Endothelial cell of umbilical vein (primary cell): ENCODE measurements at regions of chr13 and their contacts with region 1.

Region 1: GRCh38 chr13:36346222-36347083 is at the start of gene SPART:
- DNase-seq: peak; percentile 93
- H3K4me3 ChIP-seq: peak within 1 kb of the TSS; percentile 59 to 89 (median 85)
- H3K27ac ChIP-seq: peak within 1 kb of the TSS; percentile 85
- H3K4me1 ChIP-seq: peaks cover 14% of the 10 kb centered on the region
- H3K27me3 ChIP-seq: no peaks in the 10 kb centered on the region
- CTCF ChIP-seq: peak; percentile 97 to 99
- POLR2A ChIP-seq: no peak
- total RNA-seq, gene SPART: 73.6 and 74.1 TPM in 2 replicates

Region 2: GRCh38 chr13:35978603-35979316 is 367.7 kb before region 1 on chr13:
- CTCF ChIA-PET with region 1: interaction called, 4 read pairs
- POLR2A ChIA-PET with region 1: no interaction called
- dilution Hi-C with region 1: no loop called
- intact Hi-C with region 1: loop called (anchors 2 kb)
- DNase-seq: peak; percentile 78
- H3K4me3 ChIP-seq: no peak overlapping the region
- H3K27ac ChIP-seq: no peak overlapping the region
- H3K4me1 ChIP-seq: peaks cover 7% of the 10 kb centered on the region
- H3K27me3 ChIP-seq: no peaks in the 10 kb centered on the region
- CTCF ChIP-seq: peak; percentile 35 to 50
- POLR2A ChIP-seq: no peak

Region 3: GRCh38 chr13:36297366-36298338 is 48.8 kb before region 1 on chr13 and contains the start of gene CCDC169:
- CTCF ChIA-PET with region 1: interaction called, 9 read pairs
- POLR2A ChIA-PET with region 1: no interaction called
- dilution Hi-C with region 1: no loop called
- intact Hi-C with region 1: loop called (anchors 2 kb)
- DNase-seq: peak; percentile 85
- H3K4me3 ChIP-seq: peak within 1 kb of the TSS; percentile 31 to 69 (median 59)
- H3K27ac ChIP-seq: peak within 1 kb of the TSS; percentile 17
- H3K4me1 ChIP-seq: peaks cover 18% of the 10 kb centered on the region
- H3K27me3 ChIP-seq: no peaks in the 10 kb centered on the region
- CTCF ChIP-seq: no peak
- POLR2A ChIP-seq: peak; percentile 84
- total RNA-seq, gene CCDC169: 2.5 and 5.3 TPM in 2 replicates

Region 4: DNA sequence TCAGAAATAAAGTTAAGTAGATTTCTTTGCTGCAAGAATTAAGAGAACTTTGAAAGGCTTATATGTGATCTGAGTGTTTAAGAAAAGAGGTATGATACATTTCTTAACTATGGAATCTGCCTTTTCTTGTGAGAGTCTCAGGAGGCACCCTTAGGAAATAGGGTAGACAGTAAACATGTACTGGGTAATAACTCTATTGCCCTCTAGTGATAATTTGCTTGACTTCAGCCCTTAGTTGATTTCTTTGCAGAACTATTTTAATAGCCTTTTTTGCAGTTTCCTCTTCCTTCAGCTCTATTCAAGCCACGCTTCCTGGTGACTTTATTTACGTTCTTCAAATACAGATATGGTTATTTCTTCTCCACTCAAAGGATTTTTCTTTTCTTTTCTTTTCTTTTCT is 48.8 kb after region 1 on chr13:
- CTCF ChIA-PET with region 1: interaction called, 24 read pairs
- POLR2A ChIA-PET with region 1: no interaction called
- dilution Hi-C with region 1: no loop called
- intact Hi-C with region 1: loop called (anchors 1 kb)
- DNase-seq: peak; percentile 54
- H3K4me3 ChIP-seq: no peak overlapping the region
- H3K27ac ChIP-seq: no peak overlapping the region
- H3K4me1 ChIP-seq: no peaks in the 10 kb centered on the region
- H3K27me3 ChIP-seq: peaks cover 0 to 4% of the 10 kb centered on the region in 2 experiments
- CTCF ChIP-seq: peak in 1 of 2 donors; percentile 34
- POLR2A ChIP-seq: no peak

Region 5: GRCh38 chr13:36736119-36736726 is 389.8 kb after region 1 on chr13:
- CTCF ChIA-PET with region 1: interaction called, 55 read pairs
- POLR2A ChIA-PET with region 1: no interaction called
- dilution Hi-C with region 1: no loop called
- intact Hi-C with region 1: loop called (anchors 1 kb)
- DNase-seq: peak; percentile 65
- H3K4me3 ChIP-seq: no peak overlapping the region
- H3K27ac ChIP-seq: no peak overlapping the region
- H3K4me1 ChIP-seq: no peaks in the 10 kb centered on the region
- H3K27me3 ChIP-seq: peaks cover 5 to 8% of the 10 kb centered on the region in 2 experiments
- CTCF ChIP-seq: peak; percentile 45 to 48
- POLR2A ChIP-seq: no peak

Region 6: DNA sequence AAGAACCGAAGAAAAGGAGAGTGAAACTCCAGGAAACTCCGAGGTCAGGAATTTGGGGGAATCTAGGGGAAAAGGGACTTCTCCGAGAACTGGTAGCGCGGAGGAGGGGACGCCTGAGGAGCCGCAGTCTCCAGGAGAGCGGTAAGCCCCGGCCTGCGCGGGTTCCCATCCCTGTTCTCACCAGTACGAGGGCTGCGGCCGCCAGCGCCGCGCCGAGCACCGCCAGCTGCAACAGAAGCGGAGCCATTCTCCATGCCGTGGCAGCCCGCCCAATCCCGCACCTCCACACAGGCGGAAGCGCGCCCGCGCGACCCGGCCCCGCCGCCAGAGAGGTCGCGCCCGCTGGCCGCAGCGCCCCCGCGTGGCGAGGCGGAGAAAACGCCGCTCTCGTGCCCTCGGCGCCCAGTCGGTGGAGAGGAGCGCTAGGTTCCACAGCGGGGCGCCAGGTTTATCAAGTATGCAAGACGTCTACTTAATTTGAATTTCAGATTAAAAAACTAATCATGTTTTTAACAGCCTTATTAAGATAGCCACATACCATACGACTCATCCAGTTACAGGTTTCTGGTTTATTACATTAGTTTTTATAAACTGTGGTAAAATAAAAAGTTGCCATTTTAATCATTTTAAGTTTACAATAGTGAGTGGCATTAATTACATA is 652.7 kb after region 1 on chr13 and contains the start of gene ALG5:
- CTCF ChIA-PET with region 1: no interaction called
- POLR2A ChIA-PET with region 1: no interaction called
- dilution Hi-C with region 1: no loop called
- intact Hi-C with region 1: loop called (anchors 10 kb)
- DNase-seq: peak; percentile 94
- H3K4me3 ChIP-seq: peak within 1 kb of the TSS; percentile 89 to 97 (median 94)
- H3K27ac ChIP-seq: peak within 1 kb of the TSS; percentile 94
- H3K4me1 ChIP-seq: peaks cover 21% of the 10 kb centered on the region
- H3K27me3 ChIP-seq: no peaks in the 10 kb centered on the region
- CTCF ChIP-seq: peak; percentile 81 to 99
- POLR2A ChIP-seq: peak; percentile 94
- total RNA-seq, gene ALG5: 29.3 and 31.3 TPM in 2 replicates